Ovary (tissue), 10 donors: ENCODE measurements at regions of chr11 and their contacts with region 1.

Region 1: DNA sequence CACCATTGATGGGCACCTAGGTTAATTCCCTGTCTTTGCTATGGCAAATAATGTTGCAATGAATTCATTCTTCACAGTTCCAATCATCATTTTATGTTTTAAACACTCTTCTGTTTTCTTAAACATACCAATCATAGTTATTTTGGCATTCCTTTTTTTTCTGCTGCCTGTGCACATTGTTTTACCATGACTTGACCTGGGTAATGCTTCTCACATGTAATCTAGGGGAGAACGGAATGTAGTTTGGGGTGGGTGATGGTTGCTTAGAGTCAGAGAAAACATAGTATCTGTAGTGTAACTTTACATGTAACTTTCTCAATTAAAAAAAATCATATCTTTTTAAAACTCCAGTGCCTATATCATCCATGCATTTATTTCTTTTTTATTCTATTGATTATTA is 1945.3 kb upstream of the RAG2 start:
- DNase-seq: no peak
- H3K4me3 ChIP-seq: no peak overlapping the region
- H3K27ac ChIP-seq: no peak overlapping the region
- H3K4me1 ChIP-seq: no peaks in the 10 kb centered on the region
- H3K27me3 ChIP-seq: no peaks in the 10 kb centered on the region
- CTCF ChIP-seq: no peak
- EP300 ChIP-seq: no peak
- POLR2A ChIP-seq: no peak

Region 2: DNA sequence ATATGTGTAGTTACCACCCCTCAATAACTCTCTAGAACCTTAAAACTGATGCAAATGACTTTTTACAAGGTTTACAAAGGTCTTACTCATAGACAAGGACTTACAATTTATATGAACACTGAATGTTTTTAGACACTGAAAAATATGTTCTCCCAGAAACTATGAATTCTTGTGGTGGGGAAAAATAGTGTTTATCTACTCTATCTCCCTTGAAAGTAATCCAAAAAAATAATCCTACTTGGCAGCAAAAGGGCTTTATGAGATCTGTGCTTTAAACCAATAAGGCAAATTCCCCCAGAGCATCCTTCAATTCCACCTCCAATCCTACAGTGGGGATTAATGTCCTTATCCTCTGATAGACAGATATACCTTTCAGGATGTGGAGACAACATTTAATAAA is 38.8 kb after region 1 on chr11:
- intact Hi-C with region 1: no loop called
- DNase-seq: no peak
- H3K4me3 ChIP-seq: no peak overlapping the region
- H3K27ac ChIP-seq: no peak overlapping the region
- H3K4me1 ChIP-seq: no peaks in the 10 kb centered on the region
- H3K27me3 ChIP-seq: no peaks in the 10 kb centered on the region
- CTCF ChIP-seq: no peak
- EP300 ChIP-seq: no peak
- POLR2A ChIP-seq: no peak

Region 3: DNA sequence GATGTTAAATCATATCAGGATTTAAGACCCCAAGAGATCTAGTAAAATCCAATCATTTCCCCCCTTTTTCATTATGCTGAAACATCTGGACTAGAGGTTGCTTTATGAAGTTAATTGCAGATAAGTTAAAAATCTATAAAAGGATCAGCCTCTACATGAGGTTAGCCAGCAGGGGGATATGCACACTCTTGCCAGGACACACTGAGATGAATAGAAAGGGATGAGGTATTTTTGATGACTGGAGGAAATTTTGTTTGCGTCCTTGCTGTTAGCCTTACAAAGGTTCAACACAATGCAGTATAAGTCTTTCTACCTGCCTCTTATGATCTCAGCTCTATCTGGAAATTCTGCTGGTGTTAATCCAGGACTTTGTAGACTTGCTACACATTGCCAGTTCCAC is 1881.9 kb after region 1 on chr11:
- intact Hi-C with region 1: loop called in 1 of 4 experiments (anchors 10 kb)
- DNase-seq: no peak
- H3K4me3 ChIP-seq: no peak overlapping the region
- H3K27ac ChIP-seq: no peak overlapping the region
- H3K4me1 ChIP-seq: no peaks in the 10 kb centered on the region
- H3K27me3 ChIP-seq: no peaks in the 10 kb centered on the region
- CTCF ChIP-seq: no peak
- EP300 ChIP-seq: no peak
- POLR2A ChIP-seq: no peak